Thyroid gland (tissue), 4 donors: ENCODE measurements at regions of chr12 and their contacts with region 1.

Region 1: GRCh38 chr12:69070319-69071090 is 137.5 kb upstream of the CPM start:
- DNase-seq: peak; percentile 63 to 69
- H3K4me3 ChIP-seq: no peak overlapping the region
- H3K27ac ChIP-seq: no peak overlapping the region
- H3K4me1 ChIP-seq: peaks cover 0 to 10% of the 10 kb centered on the region in 2 donors
- H3K27me3 ChIP-seq: no peaks in the 10 kb centered on the region
- CTCF ChIP-seq: peak; percentile 64 to 85 (median 75)
- POLR2A ChIP-seq: no peak

Region 2: GRCh38 chr12:68559984-68560850 is 510.3 kb before region 1 on chr12:
- intact Hi-C with region 1: no loop called
- DNase-seq: no peak
- H3K4me3 ChIP-seq: no peak overlapping the region
- H3K27ac ChIP-seq: no peak overlapping the region
- H3K4me1 ChIP-seq: no peaks in the 10 kb centered on the region
- H3K27me3 ChIP-seq: no peaks in the 10 kb centered on the region
- CTCF ChIP-seq: no peak
- POLR2A ChIP-seq: no peak

Region 3: DNA sequence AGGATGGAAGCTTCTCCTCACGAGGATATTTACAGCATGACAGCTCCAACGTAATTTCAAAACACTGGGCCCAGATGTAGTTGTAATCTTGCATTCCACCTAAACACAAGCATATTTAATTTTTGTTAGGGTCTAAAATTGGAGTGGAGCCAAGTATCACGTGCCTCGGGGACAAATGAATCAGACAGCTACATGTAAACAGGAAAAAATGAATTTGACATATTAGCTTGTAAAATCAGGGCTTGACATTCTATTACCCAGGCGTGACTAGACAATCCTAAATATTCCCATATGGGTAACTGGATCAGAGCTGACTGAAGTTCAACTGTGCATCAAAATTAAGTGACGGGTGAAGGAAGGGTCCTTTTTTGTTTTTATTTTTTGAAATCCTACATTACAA is 203.6 kb before region 1 on chr12:
- intact Hi-C with region 1: loop called (anchors 5 kb)
- DNase-seq: no peak
- H3K4me3 ChIP-seq: no peak overlapping the region
- H3K27ac ChIP-seq: no peak overlapping the region
- H3K4me1 ChIP-seq: peaks cover 0 to 3% of the 10 kb centered on the region in 2 donors
- H3K27me3 ChIP-seq: no peaks in the 10 kb centered on the region
- CTCF ChIP-seq: no peak
- POLR2A ChIP-seq: no peak

Region 4: DNA sequence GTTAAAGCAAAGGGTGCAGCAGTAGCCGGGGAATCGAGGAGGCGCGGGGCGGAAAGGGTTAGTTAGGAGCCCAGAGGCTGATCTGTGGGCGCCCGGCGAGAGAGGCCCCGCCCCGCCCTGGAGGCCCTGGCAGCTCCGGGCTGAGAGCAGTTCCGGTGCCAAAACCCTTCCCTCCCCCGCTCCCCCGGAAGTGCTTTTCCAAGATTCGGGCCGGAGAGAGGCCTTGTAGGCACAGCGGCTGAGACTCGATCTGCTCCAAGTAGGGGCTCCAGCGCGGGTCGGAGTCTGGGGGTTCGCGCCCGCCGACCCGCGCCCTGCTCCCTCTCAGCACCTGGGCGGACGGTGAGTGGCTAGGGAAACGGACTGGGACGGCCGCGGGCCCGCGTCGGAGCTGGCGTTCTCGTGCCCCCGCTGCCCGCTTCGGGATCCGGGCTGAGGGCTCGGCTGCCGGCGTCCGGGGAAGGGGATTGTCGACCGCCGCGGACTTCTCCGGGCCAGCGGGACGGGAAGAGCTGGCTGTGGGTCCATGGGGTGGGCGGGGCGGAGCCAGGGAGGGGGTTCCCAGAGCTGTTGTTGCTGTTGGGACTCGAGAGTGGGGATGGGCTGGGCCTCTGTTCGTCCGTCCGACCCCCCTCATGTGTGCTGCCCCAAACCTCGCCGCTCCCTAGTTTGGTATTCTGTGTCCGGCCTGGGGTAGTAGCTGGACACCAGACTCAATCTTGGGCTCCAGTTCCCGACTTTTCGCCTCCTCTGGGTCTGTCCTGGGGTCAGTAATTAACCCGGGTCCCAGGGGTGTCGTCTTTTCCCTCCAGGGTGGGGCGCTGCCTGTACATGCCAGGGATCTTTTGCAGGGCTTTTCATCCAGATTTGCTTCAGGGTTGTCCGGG is 399.9 kb after region 1 on chr12 and contains the start of gene FRS2:
- intact Hi-C with region 1: no loop called
- DNase-seq: peak; percentile 91
- H3K4me3 ChIP-seq: peak within 1 kb of the TSS; percentile 71 to 95 (median 78)
- H3K27ac ChIP-seq: peak within 1 kb of the TSS; percentile 82 to 95 (median 82)
- H3K4me1 ChIP-seq: peaks cover 20 to 47% of the 10 kb centered on the region in 2 donors
- H3K27me3 ChIP-seq: no peaks in the 10 kb centered on the region
- CTCF ChIP-seq: peak in 3 of 6 experiments; percentile 34 to 40 (median 36)
- POLR2A ChIP-seq: peak in 1 of 2 donors; percentile 80
- total RNA-seq, gene FRS2: 52.0 to 79.0 (median 61.0) TPM